ENCODE measurements at regions of chr6 and their contacts with region 1.

Region 1: GRCh38 chr6:131688286-131688685 is 12.9 kb downstream of the OR2A4 start:
- DNase-seq: no peak
- H3K4me3 Mint-ChIP-seq: no peak overlapping the region
- H3K27ac Mint-ChIP-seq: peak overlapping the region; percentile 34
- H3K4me1 Mint-ChIP-seq: peaks cover 18% of the 10 kb centered on the region
- H3K27me3 Mint-ChIP-seq: no peaks in the 10 kb centered on the region

Region 2: DNA sequence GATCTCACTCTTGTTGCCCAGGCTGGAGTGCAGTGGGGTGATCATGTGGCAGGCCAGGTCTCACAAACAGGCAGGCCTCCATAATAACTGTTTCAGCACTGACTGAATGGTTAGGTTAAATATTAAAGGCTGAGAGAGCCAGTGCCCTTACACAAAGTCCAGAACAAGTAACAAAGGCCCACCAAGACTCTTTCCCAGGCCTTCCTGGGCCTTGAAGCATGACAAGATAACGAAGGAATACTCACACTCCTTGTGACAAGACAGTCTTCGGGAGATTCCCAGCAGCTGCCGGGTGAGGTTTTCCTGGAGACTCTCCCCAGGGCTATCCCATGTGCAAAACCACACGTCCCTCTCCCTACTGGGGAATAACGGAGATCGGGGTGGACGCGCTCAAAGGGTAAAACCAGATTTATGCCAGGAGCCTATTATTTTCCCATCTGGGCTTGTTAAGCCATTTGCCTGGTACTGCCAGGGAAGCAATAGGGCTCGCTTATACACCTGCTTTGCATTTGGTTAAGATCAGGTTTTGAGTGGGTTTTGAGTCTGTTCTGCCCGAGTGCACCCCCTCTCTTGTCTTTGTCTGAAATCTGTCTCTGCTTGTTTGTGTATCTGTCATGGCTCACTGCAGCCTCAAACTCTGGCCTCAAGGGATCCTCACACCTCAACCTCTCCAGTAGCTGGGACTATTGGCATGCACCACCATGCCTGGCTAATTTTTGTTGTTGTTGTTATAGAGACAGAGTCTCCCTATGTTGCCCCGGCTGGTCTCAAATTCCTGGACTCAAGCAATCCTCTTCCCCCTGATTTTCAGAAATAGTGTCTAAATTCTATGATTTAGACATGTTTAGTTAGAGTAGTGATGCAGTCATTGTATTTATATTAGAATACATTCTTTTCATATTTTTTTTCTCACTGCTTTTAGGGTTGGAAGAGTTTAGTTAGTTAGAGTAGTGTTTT is 52.6 kb before region 1 on chr6:
- CTCF ChIA-PET with region 1: interaction called, 4 read pairs
- POLR2A ChIA-PET with region 1: no interaction called
- intact Hi-C with region 1: loop called (anchors 1 kb)
- DNase-seq: no peak
- H3K4me3 Mint-ChIP-seq: no peak overlapping the region
- H3K27ac Mint-ChIP-seq: no peak overlapping the region
- H3K4me1 Mint-ChIP-seq: peaks cover 1% of the 10 kb centered on the region
- H3K27me3 Mint-ChIP-seq: no peaks in the 10 kb centered on the region

Region 3: GRCh38 chr6:131787766-131788712 is 99.8 kb after region 1 on chr6:
- CTCF ChIA-PET with region 1: no interaction called
- POLR2A ChIA-PET with region 1: no interaction called
- intact Hi-C with region 1: loop called (anchors 5 kb)
- DNase-seq: no peak
- H3K4me3 Mint-ChIP-seq: no peak overlapping the region
- H3K27ac Mint-ChIP-seq: no peak overlapping the region
- H3K4me1 Mint-ChIP-seq: peaks cover 7% of the 10 kb centered on the region
- H3K27me3 Mint-ChIP-seq: peaks cover 2% of the 10 kb centered on the region

Region 4: GRCh38 chr6:131807644-131808459 is 119.6 kb after region 1 on chr6 and contains the start of gene ENPP1:
- CTCF ChIA-PET with region 1: no interaction called
- POLR2A ChIA-PET with region 1: no interaction called
- intact Hi-C with region 1: loop called (anchors 5 kb)
- DNase-seq: peak; percentile 62
- H3K4me3 Mint-ChIP-seq: peak within 1 kb of the TSS; percentile 81
- H3K27ac Mint-ChIP-seq: no peak within 1 kb of the TSS
- H3K4me1 Mint-ChIP-seq: peaks cover 24% of the 10 kb centered on the region
- H3K27me3 Mint-ChIP-seq: peaks cover 16% of the 10 kb centered on the region
- total RNA-seq, gene ENPP1: 1.1 to 1.4 TPM

Region 5: GRCh38 chr6:132498638-132499037 is 810.4 kb after region 1 on chr6:
- CTCF ChIA-PET with region 1: no interaction called
- POLR2A ChIA-PET with region 1: no interaction called
- intact Hi-C with region 1: loop called (anchors 5 kb)
- DNase-seq: no peak
- H3K4me3 Mint-ChIP-seq: no peak overlapping the region
- H3K27ac Mint-ChIP-seq: no peak overlapping the region
- H3K4me1 Mint-ChIP-seq: peaks cover 45% of the 10 kb centered on the region
- H3K27me3 Mint-ChIP-seq: no peaks in the 10 kb centered on the region

Measured in activated CD4-positive, alpha-beta memory T cell treated with anti-CD3 and anti-CD28 coated beads for 36 hours (primary cell).